ENCODE measurements at regions of chr11 and their contacts with region 1.

Region 1: GRCh38 chr11:110711776-110712658 is at the start of gene ARHGAP20:
- DNase-seq: peak; percentile 91
- H3K4me3 ChIP-seq: peak within 1 kb of the TSS; percentile 76
- H3K27ac ChIP-seq: peak within 1 kb of the TSS; percentile 52
- H3K4me1 ChIP-seq: no peaks in the 10 kb centered on the region
- H3K27me3 ChIP-seq: no peaks in the 10 kb centered on the region
- CTCF ChIP-seq: no peak
- total RNA-seq, gene ARHGAP20: 7.9 and 8.4 TPM in 2 replicates

Region 2: DNA sequence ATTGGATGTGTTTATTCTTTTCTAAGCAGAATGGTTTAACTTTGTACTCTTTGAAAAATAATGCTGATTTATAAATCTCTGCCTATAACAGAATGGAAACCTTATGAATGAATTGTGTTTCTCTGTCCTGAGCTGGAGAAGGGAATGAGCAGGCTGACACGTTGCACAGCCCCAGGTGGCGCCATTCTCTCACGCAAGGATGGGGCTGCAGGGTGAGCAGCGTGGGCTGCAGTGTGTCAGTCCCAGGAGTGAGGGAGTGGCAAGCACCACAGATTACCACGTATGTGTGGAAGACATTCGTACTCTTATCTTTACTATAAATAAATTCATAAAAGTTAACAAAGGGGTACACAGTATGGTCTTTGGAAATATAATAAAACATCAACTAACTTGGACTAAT is 248.9 kb before region 1 on chr11:
- CTCF ChIA-PET with region 1: no interaction called
- POLR2A ChIA-PET with region 1: no interaction called
- intact Hi-C with region 1: loop called (anchors 1 kb)
- DNase-seq: peak; percentile 87
- H3K4me3 ChIP-seq: no peak overlapping the region
- H3K27ac ChIP-seq: no peak overlapping the region
- H3K4me1 ChIP-seq: peaks cover 6% of the 10 kb centered on the region
- H3K27me3 ChIP-seq: no peaks in the 10 kb centered on the region
- CTCF ChIP-seq: peak; percentile 89

Region 3: DNA sequence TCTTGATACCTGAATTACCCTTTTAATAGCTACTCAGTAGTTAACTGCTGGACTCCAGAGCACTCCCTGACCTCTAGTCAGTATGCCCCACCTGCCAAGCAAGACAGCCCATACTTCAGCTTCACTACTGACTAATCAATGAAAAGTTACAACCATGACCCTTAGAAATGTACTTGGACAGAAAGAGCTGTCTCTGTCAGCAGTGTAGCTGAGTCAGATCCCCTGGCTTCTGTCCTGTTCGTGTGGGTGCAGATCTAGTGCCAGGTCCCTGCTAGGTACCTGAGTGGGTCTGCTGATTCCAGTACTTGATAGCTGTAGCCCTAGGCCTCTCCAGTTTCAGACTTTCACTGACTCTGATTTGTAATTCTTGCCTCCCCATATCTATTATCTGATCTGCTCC is 267.7 kb after region 1 on chr11:
- CTCF ChIA-PET with region 1: no interaction called
- POLR2A ChIA-PET with region 1: no interaction called
- intact Hi-C with region 1: loop called (anchors 5 kb)
- DNase-seq: no peak
- H3K4me3 ChIP-seq: no peak overlapping the region
- H3K27ac ChIP-seq: no peak overlapping the region
- H3K4me1 ChIP-seq: peaks cover 10% of the 10 kb centered on the region
- H3K27me3 ChIP-seq: no peaks in the 10 kb centered on the region
- CTCF ChIP-seq: no peak

Region 4: GRCh38 chr11:111422494-111423249 is 710.7 kb after region 1 on chr11:
- CTCF ChIA-PET with region 1: no interaction called
- POLR2A ChIA-PET with region 1: no interaction called
- intact Hi-C with region 1: loop called (anchors 10 kb)
- DNase-seq: peak; percentile 82
- H3K4me3 ChIP-seq: no peak overlapping the region
- H3K27ac ChIP-seq: no peak overlapping the region
- H3K4me1 ChIP-seq: peaks cover 15% of the 10 kb centered on the region
- H3K27me3 ChIP-seq: no peaks in the 10 kb centered on the region
- CTCF ChIP-seq: peak; percentile 99

Measured in A673 (cell line).